IMR-90 (cell line): ENCODE measurements at regions of chr7 and their contacts with region 1.

Region 1: DNA sequence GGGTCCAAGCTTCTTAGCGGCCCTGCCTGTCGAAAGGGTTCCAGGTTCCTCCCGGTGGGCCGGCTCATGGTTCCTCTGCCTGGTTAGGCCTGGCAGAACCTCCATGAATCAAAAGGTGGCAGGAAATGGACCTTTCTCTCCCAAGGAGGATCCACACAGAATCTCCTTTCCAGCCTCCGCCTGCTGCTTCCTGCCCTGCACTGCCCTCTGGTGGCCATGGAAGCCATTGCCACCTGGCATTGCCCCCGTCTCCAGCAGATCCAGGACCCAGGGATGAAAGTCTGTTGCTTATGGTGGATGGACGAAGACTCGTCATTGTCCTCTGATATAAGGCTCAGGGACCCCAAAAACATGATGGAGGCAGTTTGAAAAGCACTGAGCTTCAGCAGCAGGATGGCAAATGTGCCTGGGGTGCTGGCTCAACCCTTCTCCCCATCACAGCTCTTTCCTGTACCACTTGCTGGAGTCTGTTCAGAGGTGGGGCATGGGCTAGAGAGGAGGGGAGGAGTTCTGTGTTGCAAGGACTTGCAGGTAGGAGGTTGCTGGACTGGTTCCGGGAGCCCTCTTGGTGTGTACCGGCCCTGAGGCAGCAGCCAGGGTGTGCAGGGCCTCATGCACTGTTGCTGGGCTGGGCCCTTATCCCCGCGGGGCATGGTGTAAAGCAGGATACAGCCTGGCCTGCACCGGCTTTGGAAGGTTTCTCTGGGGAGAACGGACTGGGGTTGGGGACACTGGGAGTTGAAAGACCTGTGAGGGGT is 11.3 kb upstream of the INMT start:
- DNase-seq: peak; percentile 55
- ATAC-seq: peak; percentile 93
- H3K4me3 ChIP-seq: no peak overlapping the region
- H3K27ac ChIP-seq: no peak overlapping the region
- H3K4me1 ChIP-seq: no peaks in the 10 kb centered on the region
- H3K27me3 ChIP-seq: peaks cover 11% of the 10 kb centered on the region
- CTCF ChIP-seq: peak; percentile 94
- POLR2A ChIP-seq: no peak
- RAD21 ChIP-seq: peak; percentile 86

Region 2: GRCh38 chr7:30548762-30549344 is 191.8 kb before region 1 on chr7:
- CTCF ChIA-PET with region 1: no interaction called
- POLR2A ChIA-PET with region 1: no interaction called
- dilution Hi-C with region 1: no loop called
- in situ Hi-C with region 1: no loop called
- intact Hi-C with region 1: loop called (anchors 2 kb)
- DNase-seq: peak; percentile 73
- ATAC-seq: peak; percentile 96
- H3K4me3 ChIP-seq: no peak overlapping the region
- H3K27ac ChIP-seq: no peak overlapping the region
- H3K4me1 ChIP-seq: peaks cover 2% of the 10 kb centered on the region; the same call in 1 of the 2 replicates
- H3K27me3 ChIP-seq: no peaks in the 10 kb centered on the region
- CTCF ChIP-seq: peak; percentile 70
- POLR2A ChIP-seq: no peak
- RAD21 ChIP-seq: peak; percentile 57

Region 3: DNA sequence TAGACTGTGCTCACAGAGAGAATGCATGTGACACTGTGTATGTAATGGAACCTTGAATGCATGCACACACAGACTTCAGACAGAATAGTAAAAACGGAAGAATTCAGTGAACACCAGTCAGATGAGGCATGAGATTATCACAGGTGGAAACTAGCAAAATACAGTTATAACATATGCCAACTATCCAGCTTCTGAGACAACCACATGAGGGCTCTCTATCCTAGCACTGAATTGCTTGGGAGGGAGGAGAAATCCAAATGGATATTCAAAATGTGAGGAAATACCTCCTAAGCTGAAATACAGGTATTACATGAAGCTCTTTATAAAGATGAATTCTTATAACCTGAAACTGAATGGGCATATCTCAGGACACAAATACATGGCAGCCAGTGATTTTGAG is 115.3 kb before region 1 on chr7:
- CTCF ChIA-PET with region 1: no interaction called
- POLR2A ChIA-PET with region 1: no interaction called
- dilution Hi-C with region 1: no loop called
- in situ Hi-C with region 1: no loop called
- intact Hi-C with region 1: loop called (anchors 5 kb)
- DNase-seq: no peak
- ATAC-seq: no peak
- H3K4me3 ChIP-seq: no peak overlapping the region
- H3K27ac ChIP-seq: no peak overlapping the region
- H3K4me1 ChIP-seq: no peaks in the 10 kb centered on the region
- H3K27me3 ChIP-seq: no peaks in the 10 kb centered on the region
- CTCF ChIP-seq: no peak
- POLR2A ChIP-seq: no peak
- RAD21 ChIP-seq: no peak

Region 4: GRCh38 chr7:30697719-30698460 is 42.7 kb before region 1 on chr7:
- CTCF ChIA-PET with region 1: no interaction called
- POLR2A ChIA-PET with region 1: no interaction called
- dilution Hi-C with region 1: no loop called
- in situ Hi-C with region 1: no loop called
- intact Hi-C with region 1: no loop called
- DNase-seq: no peak
- ATAC-seq: no peak
- H3K4me3 ChIP-seq: no peak overlapping the region
- H3K27ac ChIP-seq: no peak overlapping the region
- H3K4me1 ChIP-seq: no peaks in the 10 kb centered on the region
- H3K27me3 ChIP-seq: peaks cover 51% of the 10 kb centered on the region
- CTCF ChIP-seq: no peak
- POLR2A ChIP-seq: no peak
- RAD21 ChIP-seq: no peak

Region 5: DNA sequence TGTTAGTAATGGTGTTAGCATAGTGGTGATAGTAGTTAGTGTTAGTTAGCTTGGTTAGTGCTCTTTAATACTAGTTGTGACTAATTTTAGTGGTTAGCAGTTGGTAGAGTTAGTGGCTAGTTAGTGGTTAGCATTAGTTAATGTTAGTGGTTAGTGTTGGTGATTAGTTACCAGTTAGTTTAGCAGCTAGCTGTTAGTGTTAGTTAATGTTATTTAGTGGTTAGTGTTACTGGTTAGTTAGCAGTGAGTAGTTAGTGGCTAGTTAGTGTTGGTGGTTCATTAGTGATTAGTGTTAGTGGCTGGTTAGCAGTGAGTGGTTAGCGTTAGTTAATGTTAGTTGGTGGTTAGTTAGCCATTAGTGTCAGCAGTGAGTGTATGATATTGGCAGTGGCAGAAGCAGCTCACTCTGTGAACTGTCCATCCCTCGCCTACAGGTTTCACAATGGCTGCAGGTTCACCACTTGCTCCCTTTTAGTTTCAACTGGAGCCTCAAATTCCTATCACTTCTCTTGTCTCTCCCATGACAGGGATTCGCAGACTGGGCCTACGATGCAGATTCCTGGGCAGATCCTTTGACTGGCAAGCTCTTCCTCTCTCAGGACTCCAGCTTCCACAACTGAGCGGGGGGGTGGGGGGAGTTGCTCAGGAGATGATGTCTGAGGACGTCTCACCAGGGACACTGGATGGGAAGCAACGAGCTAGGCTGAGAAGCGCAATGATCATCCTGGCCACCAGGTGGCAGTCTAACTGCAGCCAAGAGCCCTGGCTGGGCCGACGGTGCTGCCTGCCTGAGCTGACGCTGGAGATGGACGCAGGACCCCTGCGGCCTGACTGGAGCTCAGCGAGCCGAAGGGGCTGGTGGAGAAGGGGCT is 242.7 kb after region 1 on chr7:
- CTCF ChIA-PET with region 1: interaction called, 3 read pairs
- POLR2A ChIA-PET with region 1: no interaction called
- dilution Hi-C with region 1: no loop called
- in situ Hi-C with region 1: no loop called
- intact Hi-C with region 1: loop called (anchors 5 kb)
- DNase-seq: peak; percentile 69
- ATAC-seq: peak; percentile 100
- H3K4me3 ChIP-seq: no peak overlapping the region
- H3K27ac ChIP-seq: no peak overlapping the region
- H3K4me1 ChIP-seq: no peaks in the 10 kb centered on the region
- H3K27me3 ChIP-seq: peaks cover 39% of the 10 kb centered on the region
- CTCF ChIP-seq: peak; percentile 86
- POLR2A ChIP-seq: no peak
- RAD21 ChIP-seq: peak; percentile 84

Region 6: GRCh38 chr7:31122649-31123058 is 382.1 kb after region 1 on chr7:
- CTCF ChIA-PET with region 1: interaction called, 6 read pairs
- POLR2A ChIA-PET with region 1: no interaction called
- dilution Hi-C with region 1: no loop called
- in situ Hi-C with region 1: no loop called
- intact Hi-C with region 1: loop called (anchors 1 kb)
- DNase-seq: peak; percentile 90
- ATAC-seq: peak; percentile 94
- H3K4me3 ChIP-seq: no peak overlapping the region
- H3K27ac ChIP-seq: no peak overlapping the region
- H3K4me1 ChIP-seq: no peaks in the 10 kb centered on the region; the same call in 1 of the 2 replicates
- H3K27me3 ChIP-seq: no peaks in the 10 kb centered on the region; the same call in 1 of the 2 replicates
- CTCF ChIP-seq: peak; percentile 86
- POLR2A ChIP-seq: no peak
- RAD21 ChIP-seq: peak; percentile 84